ENCODE measurements at regions of chr12 and their contacts with region 1.

Region 1: GRCh38 chr12:50572271-50572670 is 67.5 kb downstream of the DIP2B start:
- DNase-seq: no peak
- ATAC-seq: peak in 5 of 8 donors; percentile 43 to 77 (median 64)
- H3K4me3 ChIP-seq: no peak overlapping the region
- H3K27ac ChIP-seq: peak overlapping the region in 2 of 10 donors; percentile 2 to 54
- H3K4me1 ChIP-seq: peaks cover 14 to 78% (median 71%) of the 10 kb centered on the region in 9 donors
- H3K27me3 ChIP-seq: no peaks in the 10 kb centered on the region
- CTCF ChIP-seq: no peak

Region 2: DNA sequence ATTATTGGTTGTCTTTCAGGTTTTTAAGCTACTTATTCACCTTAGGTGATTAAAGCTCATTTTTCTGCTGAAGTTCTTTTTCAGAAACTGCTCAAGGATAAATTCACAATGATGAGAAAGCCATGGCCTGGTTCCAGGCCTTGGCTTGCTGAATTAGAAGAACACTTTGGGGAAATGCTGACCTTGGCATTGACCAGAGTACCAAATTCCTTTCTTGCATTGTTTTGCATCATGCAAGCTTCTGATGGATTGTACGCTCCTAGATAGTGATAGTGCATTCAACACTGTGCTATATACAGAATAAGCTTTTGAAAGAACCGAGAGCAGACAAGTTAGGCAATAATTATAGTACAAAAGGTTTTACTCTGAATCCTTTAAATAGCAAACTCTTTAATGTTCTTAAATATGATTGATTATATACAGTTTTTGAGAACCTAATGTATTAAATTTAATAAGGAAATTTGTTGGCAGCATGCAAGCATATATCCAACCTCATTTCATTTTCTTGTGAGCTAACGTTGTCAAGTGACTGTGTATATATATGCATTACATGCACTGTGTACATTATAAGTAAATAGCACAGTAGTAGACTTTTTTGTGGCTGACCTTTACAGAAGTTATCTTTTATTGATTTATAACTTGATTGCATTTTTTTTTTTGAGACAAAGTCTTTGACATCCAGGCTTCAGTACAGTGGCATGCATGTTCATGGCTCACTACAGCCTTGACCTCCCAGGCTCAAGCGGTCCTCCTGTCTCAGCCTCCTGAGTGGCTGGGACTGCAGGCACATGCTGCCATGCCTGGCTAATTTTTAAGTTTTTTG is 31.8 kb after region 1 on chr12:
- intact Hi-C with region 1: loop called in 1 of 10 experiments (anchors 5 kb)
- DNase-seq: no peak
- ATAC-seq: peak; percentile 17 to 77 (median 64)
- H3K4me3 ChIP-seq: no peak overlapping the region
- H3K27ac ChIP-seq: peak overlapping the region in 5 of 10 donors; percentile 19 to 54 (median 30)
- H3K4me1 ChIP-seq: peaks cover 3 to 53% (median 36%) of the 10 kb centered on the region in 9 donors
- H3K27me3 ChIP-seq: no peaks in the 10 kb centered on the region
- CTCF ChIP-seq: no peak

Region 3: DNA sequence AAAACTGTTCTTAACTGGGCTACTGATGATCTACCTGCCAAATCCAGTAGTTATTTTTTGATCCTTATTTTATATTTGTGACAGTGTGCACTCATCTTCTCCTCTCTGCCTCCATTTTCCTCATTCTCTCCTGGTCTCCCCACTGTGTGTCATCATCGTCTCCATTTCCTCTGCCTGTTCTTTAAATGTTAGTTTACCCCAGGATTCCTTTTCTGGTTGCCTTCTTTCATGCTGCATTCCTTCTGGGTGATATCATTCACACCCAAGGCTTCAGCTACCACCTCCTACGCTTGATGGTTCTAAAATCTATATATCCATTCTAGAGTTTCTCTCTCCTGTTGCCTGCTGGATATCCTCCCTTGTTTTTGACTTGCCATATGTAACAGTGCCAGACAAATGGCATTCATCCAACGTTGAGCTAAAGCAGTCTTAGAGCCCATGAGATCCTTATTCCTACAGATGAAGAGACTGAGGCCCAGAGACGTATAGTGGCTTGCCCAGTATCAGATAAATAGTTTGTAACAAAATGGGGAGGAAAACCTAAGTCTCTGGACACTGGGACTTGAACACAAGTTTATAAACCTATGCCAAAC is 42.0 kb after region 1 on chr12:
- intact Hi-C with region 1: loop called in 1 of 10 experiments (anchors 5 kb)
- DNase-seq: no peak
- ATAC-seq: peak in 2 of 8 donors; percentile 13 to 28
- H3K4me3 ChIP-seq: no peak overlapping the region
- H3K27ac ChIP-seq: peak overlapping the region in 1 of 10 donors; percentile 23
- H3K4me1 ChIP-seq: peaks cover 6 to 74% (median 46%) of the 10 kb centered on the region in 9 donors
- H3K27me3 ChIP-seq: no peaks in the 10 kb centered on the region
- CTCF ChIP-seq: no peak

Measured in heart right ventricle (tissue), 16 donors.